ENCODE measurements at regions of chr3 and their contacts with region 1.

Region 1: DNA sequence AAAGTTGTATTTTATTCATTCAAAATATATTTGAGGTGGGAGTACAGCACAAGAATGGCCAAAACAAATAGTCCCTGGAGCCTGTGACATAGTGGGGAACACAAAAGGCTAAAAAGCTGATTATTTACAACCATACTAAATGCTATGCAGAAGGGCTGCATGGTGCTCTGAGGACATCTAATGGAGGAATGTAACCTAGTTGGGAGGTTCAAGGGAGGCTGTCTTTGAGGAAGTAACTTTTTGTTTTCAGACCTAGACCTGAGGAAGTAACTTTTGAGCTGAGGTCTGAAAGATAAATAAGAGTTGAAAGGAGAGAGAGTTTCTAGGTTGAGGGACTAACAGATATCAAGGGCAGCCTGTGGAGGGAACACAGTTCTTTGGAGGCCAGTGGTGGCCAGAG is 34.8 kb upstream of the RASA2 start:
- DNase-seq: no peak
- H3K4me3 ChIP-seq: no peak overlapping the region
- CTCF ChIP-seq: peak; percentile 70

Region 2: DNA sequence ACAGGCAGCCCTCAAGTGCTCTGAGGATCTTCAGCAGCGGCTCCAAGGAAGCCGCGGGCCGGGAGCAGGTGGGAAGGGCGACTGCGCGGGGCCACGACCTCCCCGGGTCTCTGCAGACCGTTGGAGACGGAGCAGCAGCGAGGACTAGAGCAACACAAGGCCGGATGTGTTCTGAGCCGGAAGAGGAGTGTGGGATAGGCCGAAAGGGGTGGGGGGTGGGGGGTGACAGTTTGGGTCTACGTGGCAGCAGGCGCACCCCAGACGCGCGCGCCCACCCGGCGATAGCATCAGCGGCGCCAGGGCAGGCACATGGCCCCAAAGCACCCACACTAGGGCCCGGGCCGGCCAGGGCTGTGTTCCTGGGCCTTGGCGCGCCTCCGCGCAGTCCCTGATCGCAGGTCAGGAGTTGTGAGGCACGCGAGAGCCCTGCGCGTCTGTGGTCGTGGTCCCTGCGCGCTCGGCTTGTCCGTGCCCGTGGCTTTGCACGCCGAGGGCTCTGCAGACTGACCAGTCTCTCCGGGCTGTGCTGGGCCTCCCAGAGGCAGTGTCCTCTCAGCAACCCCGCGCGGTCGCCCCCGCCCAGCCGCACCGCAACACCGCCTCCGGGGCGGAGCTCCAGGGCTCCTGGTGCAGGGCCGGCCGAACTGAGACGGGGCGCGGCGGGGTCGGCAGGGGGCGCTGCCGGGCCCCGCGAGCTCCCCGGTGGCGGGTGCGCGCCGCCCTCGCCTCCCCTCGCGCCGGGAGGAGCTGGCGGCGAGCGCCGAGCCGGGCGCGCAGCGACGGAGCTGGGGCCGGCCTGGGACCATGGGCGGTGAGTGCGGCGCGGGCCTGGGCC is 220.7 kb before region 1 on chr3 and contains the start of gene PXYLP1:
- CTCF ChIA-PET with region 1: interaction called, 30 read pairs
- POLR2A ChIA-PET with region 1: interaction called, 3 read pairs
- DNase-seq: no peak
- H3K4me3 ChIP-seq: peak within 1 kb of the TSS; percentile 71
- CTCF ChIP-seq: peak; percentile 57

Region 3: GRCh38 chr3:141311496-141312353 is 140.3 kb before region 1 on chr3:
- CTCF ChIA-PET with region 1: interaction called, 624 read pairs
- POLR2A ChIA-PET with region 1: interaction called, 7 read pairs
- DNase-seq: peak; percentile 88
- H3K4me3 ChIP-seq: peak overlapping the region; percentile 96
- CTCF ChIP-seq: peak; percentile 89

Region 4: DNA sequence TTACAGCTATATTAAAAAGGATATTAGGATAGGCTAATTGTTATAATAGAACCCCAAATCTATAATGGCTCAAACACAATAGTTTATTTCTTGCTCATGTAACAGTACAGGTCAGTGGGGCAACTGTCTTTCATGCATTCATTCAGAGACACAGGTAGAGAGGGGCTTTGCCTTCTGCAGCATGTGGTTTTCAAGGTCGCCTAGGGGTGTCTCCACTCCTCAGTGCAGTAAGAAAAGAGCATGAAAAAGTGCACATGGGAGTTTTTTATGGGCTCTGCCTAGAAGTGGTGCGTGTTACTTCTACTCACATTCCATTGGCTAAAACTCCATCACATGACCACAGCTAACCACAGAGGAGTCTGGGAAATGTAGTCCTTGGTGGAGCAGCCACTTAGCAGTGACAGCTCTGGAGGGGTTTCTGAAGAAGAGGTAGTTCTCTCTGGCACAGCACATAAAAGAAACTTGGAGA is 81.9 kb before region 1 on chr3:
- CTCF ChIA-PET with region 1: interaction called, 14 read pairs
- POLR2A ChIA-PET with region 1: interaction called, 5 read pairs
- DNase-seq: no peak
- H3K4me3 ChIP-seq: no peak overlapping the region
- CTCF ChIP-seq: peak; percentile 9

Region 5: GRCh38 chr3:141426404-141427034 is 25.5 kb before region 1 on chr3:
- CTCF ChIA-PET with region 1: interaction called, 21 read pairs
- POLR2A ChIA-PET with region 1: no interaction called
- DNase-seq: no peak
- H3K4me3 ChIP-seq: no peak overlapping the region
- CTCF ChIP-seq: no peak

Region 6: GRCh38 chr3:141471160-141471559 is 19.1 kb after region 1 on chr3:
- CTCF ChIA-PET with region 1: interaction called, 20 read pairs
- POLR2A ChIA-PET with region 1: no interaction called
- DNase-seq: no peak
- H3K4me3 ChIP-seq: no peak overlapping the region
- CTCF ChIP-seq: no peak

Measured in AG04449 (cell line).